ENCODE measurements at regions of chr15 and their contacts with region 1.

Region 1: GRCh38 chr15:89442671-89443307 is 53.6 kb downstream of the RHCG start:
- DNase-seq: peak; percentile 68 to 88
- ATAC-seq: peak; percentile 73 to 93
- H3K4me3 ChIP-seq: no peak overlapping the region
- H3K27ac ChIP-seq: no peak overlapping the region
- H3K4me1 ChIP-seq: no peaks in the 10 kb centered on the region
- CTCF ChIP-seq: peak; percentile 84
- EP300 ChIP-seq: no peak
- POLR2A ChIP-seq: no peak
- RAD21 ChIP-seq: peak; percentile 77

Region 2: GRCh38 chr15:89002281-89002761 is 440.5 kb before region 1 on chr15:
- CTCF ChIA-PET with region 1: no interaction called
- POLR2A ChIA-PET with region 1: no interaction called
- DNase-seq: peak; percentile 51 to 72
- ATAC-seq: peak; percentile 76 to 82
- H3K4me3 ChIP-seq: no peak overlapping the region
- H3K27ac ChIP-seq: peak overlapping the region; percentile 67 to 87
- H3K4me1 ChIP-seq: peaks cover 27% of the 10 kb centered on the region
- CTCF ChIP-seq: no peak
- EP300 ChIP-seq: peak in 1 of 2 experiments; percentile 61; a peak in 1 of 5 replicates
- POLR2A ChIP-seq: no peak
- RAD21 ChIP-seq: peak in 1 of 2 experiments; percentile 23; a peak in 1 of 5 replicates

Region 3: DNA sequence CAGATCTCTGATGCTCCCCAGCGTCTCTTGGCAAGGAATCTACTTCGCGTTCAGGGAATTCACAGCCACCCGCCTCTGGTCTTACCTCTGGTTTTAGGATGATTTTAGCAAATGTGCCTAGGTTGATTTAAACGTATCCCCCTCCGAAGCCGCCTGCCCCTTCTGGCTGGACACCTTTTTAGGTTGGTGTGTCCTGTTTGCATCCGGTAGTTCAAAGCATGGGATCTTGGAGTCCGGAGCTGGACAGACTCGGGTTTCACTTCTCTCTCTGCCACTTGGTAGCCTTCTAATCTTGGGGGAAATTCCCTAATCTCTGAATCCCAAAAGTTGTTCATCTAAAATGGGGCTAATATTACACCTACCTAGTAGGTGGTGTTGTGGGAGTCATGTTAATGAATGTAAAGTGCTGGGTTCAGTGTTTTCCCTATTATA is 198.3 kb before region 1 on chr15:
- CTCF ChIA-PET with region 1: no interaction called
- POLR2A ChIA-PET with region 1: no interaction called
- DNase-seq: no peak
- ATAC-seq: peak; percentile 6 to 42; a peak in 3 of 6 replicates
- H3K4me3 ChIP-seq: peak overlapping the region; percentile 82
- H3K27ac ChIP-seq: peak overlapping the region; percentile 79 to 88
- H3K4me1 ChIP-seq: peaks cover 32% of the 10 kb centered on the region; the same call in 2 of the 3 replicates
- CTCF ChIP-seq: no peak
- EP300 ChIP-seq: no peak
- POLR2A ChIP-seq: no peak
- RAD21 ChIP-seq: no peak

Region 4: DNA sequence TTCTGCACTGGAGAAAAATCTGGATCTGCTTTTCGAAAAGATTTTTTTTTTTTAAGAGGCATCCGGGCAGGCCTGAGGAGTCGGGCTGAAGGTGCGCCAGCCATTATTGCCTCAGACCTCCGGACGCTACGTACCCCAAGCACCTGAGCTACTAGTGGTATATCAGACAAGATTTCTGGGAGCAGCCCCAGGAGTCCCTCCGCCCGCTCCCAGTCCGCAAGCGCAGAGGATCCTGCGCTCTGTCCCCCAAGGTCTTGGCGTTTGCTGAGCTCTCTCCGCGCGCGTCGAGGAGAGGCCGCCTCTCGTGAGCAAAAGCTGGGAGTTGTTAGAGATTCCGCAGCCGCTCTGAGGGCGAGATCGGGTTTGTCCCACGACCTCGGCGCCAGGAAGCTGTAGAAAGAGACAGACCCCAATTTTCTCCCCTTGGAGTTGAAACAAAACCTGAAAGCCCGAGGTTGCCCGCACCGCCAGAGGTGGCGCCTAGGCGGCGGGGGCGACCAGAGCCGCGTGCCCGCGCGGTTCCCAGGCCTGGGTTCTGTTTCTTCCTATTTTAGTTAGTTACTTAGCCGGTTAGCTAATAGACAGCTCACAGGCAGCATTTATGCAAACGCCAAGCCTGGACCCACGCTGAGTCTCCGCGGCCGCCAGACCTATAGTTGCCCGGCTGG is 35.7 kb before region 1 on chr15:
- CTCF ChIA-PET with region 1: interaction called, 10 read pairs
- POLR2A ChIA-PET with region 1: no interaction called
- DNase-seq: no peak
- ATAC-seq: no peak
- H3K4me3 ChIP-seq: no peak overlapping the region
- H3K27ac ChIP-seq: no peak overlapping the region
- H3K4me1 ChIP-seq: peaks cover 6% of the 10 kb centered on the region
- CTCF ChIP-seq: no peak
- EP300 ChIP-seq: no peak
- POLR2A ChIP-seq: no peak
- RAD21 ChIP-seq: no peak

Region 5: DNA sequence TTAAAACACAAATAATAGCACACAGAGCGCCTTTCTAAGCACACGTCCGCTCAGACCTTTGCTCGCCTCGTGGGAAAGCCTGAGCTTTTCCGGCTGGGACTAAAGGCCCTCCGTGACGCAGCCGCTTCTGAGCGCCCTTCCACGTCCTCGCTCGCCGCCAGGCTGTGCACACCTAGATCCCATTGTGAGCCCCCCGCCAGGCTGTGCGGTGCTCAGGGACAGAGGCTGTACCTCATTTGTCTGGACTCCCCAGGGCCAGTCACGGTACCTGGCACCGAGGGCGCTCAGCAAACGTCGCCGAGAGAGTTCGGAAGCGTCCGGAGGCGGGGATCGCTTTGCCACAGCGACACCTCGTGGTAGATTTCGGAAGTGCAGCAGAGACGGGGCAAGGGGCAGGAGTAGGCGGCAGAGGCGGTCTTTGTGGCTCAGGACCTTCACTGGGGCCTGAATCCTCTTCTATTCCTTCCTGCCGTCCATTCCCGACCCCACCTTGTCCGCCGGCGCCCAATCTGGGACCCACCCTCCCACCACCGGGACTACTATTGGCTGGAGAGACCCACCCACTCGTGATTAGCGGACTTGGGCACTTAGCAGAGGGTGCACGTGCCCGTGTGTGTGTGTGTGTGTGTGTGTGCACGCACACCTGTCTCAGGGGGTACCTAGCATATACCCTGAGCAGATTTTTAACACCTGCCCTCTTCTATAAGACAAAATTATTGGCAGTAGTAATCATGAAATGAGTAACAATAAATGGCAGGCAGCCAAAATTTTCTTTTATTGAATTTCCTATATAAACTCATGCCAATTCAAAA is 12.1 kb before region 1 on chr15:
- CTCF ChIA-PET with region 1: interaction called, 47 read pairs
- POLR2A ChIA-PET with region 1: no interaction called
- DNase-seq: peak; percentile 80 to 96
- ATAC-seq: peak; percentile 80 to 96
- H3K4me3 ChIP-seq: peak overlapping the region; percentile 41
- H3K27ac ChIP-seq: peak overlapping the region; percentile 69 to 81
- H3K4me1 ChIP-seq: peaks cover 27% of the 10 kb centered on the region; the same call in 2 of the 3 replicates
- CTCF ChIP-seq: peak; percentile 96
- EP300 ChIP-seq: no peak
- POLR2A ChIP-seq: 0 out of 2 replicates have a peak, but pooled peaks have one; percentile 8
- RAD21 ChIP-seq: peak; percentile 83 to 85

Region 6: DNA sequence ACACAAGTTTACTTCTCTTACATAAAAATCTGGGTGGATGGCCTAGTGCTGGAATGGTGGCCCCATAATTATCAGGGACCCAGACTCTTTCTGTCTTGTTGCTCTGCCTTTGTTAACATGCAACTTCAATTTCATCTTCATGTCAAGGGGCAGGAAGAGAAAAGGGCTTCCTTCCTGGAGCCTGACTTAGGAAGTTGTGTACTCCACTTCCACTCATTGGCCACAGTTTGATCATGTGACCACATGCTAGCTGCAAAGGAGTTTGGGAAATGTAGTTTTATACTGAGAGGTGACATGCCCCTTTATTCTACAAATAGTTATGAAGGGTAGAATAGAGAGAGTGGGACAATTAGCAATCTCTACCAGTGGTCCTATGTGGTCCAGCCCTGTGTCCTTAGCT is 14.3 kb after region 1 on chr15:
- CTCF ChIA-PET with region 1: interaction called, 67 read pairs
- POLR2A ChIA-PET with region 1: no interaction called
- DNase-seq: peak; percentile 77 to 81
- ATAC-seq: peak in 1 of 2 experiments; percentile 83; a peak in 3 of 6 replicates
- H3K4me3 ChIP-seq: no peak overlapping the region
- H3K27ac ChIP-seq: no peak overlapping the region
- H3K4me1 ChIP-seq: peaks cover 16% of the 10 kb centered on the region; the same call in 2 of the 3 replicates
- CTCF ChIP-seq: no peak
- EP300 ChIP-seq: no peak
- POLR2A ChIP-seq: no peak
- RAD21 ChIP-seq: no peak

Region 7: DNA sequence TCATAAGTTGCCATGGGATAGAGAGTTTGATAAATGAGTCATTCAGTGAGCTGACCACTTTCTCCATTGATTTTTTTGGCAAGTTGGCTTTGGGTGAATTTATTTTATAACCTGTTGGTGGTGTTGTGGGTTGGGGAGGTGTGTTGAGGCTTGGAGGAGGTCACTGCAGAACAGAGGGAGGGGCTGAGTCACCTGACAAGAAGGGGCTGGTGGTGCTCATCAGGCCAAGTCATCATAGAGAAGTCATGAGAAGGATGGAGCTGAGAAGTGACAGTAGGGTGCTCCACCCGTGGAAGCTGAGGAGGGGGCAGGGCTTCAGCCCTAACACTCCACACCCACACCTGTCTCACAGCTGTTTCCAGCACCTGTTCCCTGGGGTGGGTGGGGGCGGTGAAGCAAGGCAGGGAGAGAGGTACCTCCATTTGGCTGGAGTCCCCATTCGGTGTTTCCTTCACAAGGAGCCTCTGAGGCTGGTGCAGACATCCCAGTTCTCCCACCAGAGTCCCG is 43.1 kb after region 1 on chr15:
- CTCF ChIA-PET with region 1: interaction called, 158 read pairs
- POLR2A ChIA-PET with region 1: no interaction called
- DNase-seq: no peak
- ATAC-seq: no peak
- H3K4me3 ChIP-seq: no peak overlapping the region
- H3K27ac ChIP-seq: no peak overlapping the region
- H3K4me1 ChIP-seq: peaks cover 7% of the 10 kb centered on the region; the same call in 1 of the 3 replicates
- CTCF ChIP-seq: no peak
- EP300 ChIP-seq: no peak
- POLR2A ChIP-seq: no peak
- RAD21 ChIP-seq: no peak

Region 8: GRCh38 chr15:89556413-89557262 is 113.8 kb after region 1 on chr15:
- CTCF ChIA-PET with region 1: interaction called, 13 read pairs
- POLR2A ChIA-PET with region 1: no interaction called
- DNase-seq: peak; percentile 72 to 89
- ATAC-seq: peak; percentile 79 to 93
- H3K4me3 ChIP-seq: no peak overlapping the region
- H3K27ac ChIP-seq: peak overlapping the region in 1 of 2 experiments; percentile 48; a peak in 1 of 6 replicates
- H3K4me1 ChIP-seq: peaks cover 3% of the 10 kb centered on the region; the same call in 2 of the 3 replicates
- CTCF ChIP-seq: peak; percentile 89
- EP300 ChIP-seq: no peak
- POLR2A ChIP-seq: no peak
- RAD21 ChIP-seq: peak; percentile 86 to 87

Region 9: DNA sequence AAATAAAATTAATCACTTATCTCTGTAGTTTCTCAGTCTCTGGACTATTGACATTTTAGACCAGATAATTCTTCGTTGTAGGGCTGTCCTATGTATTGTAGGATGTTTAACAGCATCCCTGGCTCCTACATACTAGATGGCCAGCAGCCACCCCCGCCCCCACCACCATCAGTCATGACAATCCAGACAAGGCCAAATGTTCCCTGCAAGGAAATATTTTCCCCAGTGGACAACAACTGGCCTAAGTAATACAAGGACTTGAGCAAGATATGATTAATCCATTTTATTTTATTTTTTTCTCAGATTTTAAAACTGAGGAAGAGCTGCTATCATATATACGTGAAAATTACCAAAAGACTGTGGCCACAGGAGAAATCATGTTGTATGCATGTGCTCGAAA is 156.2 kb after region 1 on chr15:
- CTCF ChIA-PET with region 1: no interaction called
- POLR2A ChIA-PET with region 1: no interaction called
- DNase-seq: no peak
- ATAC-seq: no peak
- H3K4me3 ChIP-seq: no peak overlapping the region
- H3K27ac ChIP-seq: no peak overlapping the region
- H3K4me1 ChIP-seq: no peaks in the 10 kb centered on the region
- CTCF ChIP-seq: no peak
- EP300 ChIP-seq: no peak
- POLR2A ChIP-seq: no peak
- RAD21 ChIP-seq: no peak

Measured in A549 (cell line).